Common myeloid progenitor, CD34-positive (primary cell): ENCODE measurements at regions of chr9 and their contacts with region 1.

Region 1: GRCh38 chr9:125143375-125144090 is at the start of gene SCAI:
- DNase-seq: peak; percentile 99
- H3K4me3 ChIP-seq: peak within 1 kb of the TSS; percentile 68 to 100 (median 87)
- H3K27ac ChIP-seq: peak within 1 kb of the TSS; percentile 50 to 78
- H3K4me1 ChIP-seq: peaks cover 5 to 26% (median 12%) of the 10 kb centered on the region in 4 experiments
- H3K27me3 ChIP-seq: no peaks in the 10 kb centered on the region

Region 2: DNA sequence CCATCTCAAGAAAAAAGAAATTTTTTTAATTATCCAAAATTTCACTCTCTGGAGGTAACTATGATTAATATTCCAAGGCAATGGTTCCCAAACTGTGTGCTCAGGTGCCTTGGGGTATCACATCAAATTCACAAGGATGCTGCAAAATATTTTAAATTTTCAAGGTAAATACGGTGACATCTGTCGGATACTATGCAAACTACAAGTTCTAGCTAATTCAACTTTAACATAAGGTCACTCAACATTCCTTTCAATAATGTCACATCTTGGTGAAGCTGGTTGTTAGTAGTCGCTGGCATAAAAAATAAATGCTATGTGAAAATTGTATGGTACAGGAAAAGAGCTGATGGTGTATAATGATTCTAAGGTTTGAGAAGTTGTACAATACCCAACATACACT is 29.6 kb before region 1 on chr9:
- CTCF ChIA-PET with region 1: interaction called, 13 read pairs
- POLR2A ChIA-PET with region 1: no interaction called
- DNase-seq: no peak
- H3K4me3 ChIP-seq: no peak overlapping the region
- H3K27ac ChIP-seq: no peak overlapping the region
- H3K4me1 ChIP-seq: peaks cover 0 to 5% (median 3%) of the 10 kb centered on the region in 4 experiments
- H3K27me3 ChIP-seq: no peaks in the 10 kb centered on the region

Region 3: DNA sequence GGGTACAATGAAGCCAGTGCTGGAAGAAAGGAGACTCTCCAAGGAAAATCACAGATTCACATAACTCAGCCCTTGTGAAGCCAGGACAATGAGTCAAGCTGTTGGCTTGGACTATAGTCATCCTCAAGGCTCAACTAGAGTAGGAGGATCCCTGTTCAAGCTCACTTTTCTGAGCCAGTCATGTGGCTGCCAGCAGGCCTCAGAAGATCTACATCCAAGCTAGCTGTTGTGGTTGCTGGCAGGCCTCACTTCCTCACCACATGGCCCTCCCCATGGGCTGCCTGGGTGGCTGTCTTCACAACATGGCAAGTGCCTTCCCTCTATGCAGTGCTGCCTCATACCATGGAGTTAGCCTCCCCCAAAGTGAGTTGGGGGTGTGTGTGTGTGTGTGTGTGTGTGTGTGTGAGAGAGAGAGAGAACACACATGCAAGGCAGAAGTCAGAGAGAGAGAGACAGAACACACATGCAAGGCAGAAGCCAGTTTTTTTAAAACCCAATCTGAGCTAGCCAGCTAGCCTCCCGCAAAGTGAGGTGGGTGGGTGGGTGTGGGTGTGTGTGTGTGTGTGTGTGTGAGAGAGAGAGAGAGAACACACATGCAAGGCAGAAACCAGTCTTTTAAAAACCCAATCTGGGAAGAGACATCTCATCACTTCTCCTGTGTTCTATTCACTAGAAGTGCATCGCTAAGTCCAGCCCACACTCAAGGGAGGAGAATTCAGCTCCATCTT is 17.4 kb before region 1 on chr9:
- CTCF ChIA-PET with region 1: interaction called, 18 read pairs
- POLR2A ChIA-PET with region 1: interaction called, 4 read pairs
- DNase-seq: peak; percentile 99 to 100 (median 99)
- H3K4me3 ChIP-seq: peak overlapping the region in 1 of 7 experiments; percentile 20
- H3K27ac ChIP-seq: peak overlapping the region in 1 of 2 experiments; percentile 23
- H3K4me1 ChIP-seq: peaks cover 3 to 54% (median 34%) of the 10 kb centered on the region in 4 experiments
- H3K27me3 ChIP-seq: no peaks in the 10 kb centered on the region